ENCODE measurements at regions of chr11 and their contacts with region 1.

Region 1: DNA sequence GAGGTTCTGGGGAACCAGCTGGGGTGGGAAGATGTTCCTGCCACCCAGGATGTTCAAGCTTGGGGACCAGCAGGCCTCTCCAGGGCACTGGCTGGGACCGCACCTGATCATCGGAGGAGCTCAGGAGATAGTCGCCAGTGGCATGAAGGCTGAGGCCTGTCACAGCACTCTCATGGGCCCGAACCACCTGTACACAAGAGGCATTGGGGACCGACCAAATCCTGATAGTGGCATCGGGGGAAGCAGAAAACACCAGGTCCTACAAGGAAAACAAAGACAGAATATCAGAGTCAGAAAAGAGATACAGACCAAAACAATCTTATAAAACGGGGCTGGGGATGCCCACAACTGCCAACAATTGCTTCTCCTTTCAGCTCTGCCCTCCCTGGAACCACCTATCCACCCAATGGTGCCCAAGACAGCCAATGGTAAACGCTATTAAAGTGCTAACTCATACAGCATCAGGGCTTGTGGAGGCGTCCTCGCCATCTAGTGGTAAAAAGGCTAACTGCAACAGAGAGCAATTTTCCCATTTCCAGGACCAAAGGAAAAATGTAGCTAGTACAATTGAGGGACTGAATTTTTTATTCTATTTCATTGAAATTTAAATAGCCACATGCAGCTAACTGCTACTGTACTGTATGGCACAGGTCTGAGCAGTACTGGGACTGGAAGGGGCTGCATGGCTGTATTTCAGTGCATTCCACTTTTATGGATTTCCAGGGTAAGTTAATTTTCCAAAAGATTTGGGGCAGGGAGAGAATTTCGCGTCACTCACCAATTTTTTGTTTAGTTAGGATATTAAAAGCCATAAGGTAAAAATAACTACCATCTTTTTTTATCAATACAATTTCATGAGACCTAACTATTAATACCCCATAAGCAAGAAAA is 7.1 kb downstream of the PRPF19 start:
- DNase-seq: peak; percentile 24
- H3K4me3 ChIP-seq: no peak overlapping the region
- H3K27ac ChIP-seq: peak overlapping the region; percentile 31
- H3K27me3 ChIP-seq: no peaks in the 10 kb centered on the region
- CTCF ChIP-seq: peak; percentile 99

Region 2: DNA sequence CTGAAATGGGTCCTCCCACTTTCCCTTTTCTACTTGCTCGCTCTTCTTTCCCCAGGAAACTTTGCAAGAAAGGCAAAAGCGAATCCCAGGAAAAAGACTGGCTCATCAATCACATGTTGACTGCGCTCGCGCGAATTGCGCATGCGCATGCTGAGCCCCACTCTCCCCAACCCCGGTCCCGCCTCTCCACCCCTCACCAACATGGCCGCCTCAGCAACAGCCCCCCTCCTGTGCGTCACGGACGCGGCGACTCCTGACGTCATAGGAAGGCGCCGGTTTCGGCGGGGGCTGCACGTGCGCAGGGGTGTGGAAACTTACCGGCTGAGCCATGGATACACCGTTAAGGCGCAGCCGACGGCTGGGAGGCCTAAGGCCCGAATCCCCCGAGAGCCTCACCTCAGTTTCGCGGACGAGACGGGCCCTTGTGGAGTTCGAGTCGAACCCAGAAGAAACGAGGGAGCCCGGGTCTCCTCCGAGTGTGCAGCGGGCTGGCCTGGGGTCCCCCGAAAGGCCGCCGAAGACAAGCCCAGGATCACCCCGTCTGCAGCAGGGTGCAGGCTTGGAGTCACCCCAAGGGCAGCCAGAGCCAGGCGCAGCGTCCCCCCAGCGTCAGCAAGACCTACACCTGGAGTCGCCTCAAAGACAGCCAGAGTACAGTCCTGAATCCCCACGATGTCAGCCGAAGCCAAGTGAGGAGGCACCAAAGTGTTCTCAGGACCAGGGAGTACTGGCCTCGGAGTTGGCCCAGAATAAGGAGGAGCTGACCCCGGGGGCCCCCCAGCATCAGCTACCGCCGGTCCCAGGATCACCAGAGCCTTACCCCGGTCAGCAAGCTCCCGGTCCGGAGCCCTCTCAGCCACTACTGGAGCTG is 57.3 kb before region 1 on chr11 and contains the start of gene CCDC86:
- CTCF ChIA-PET with region 1: interaction called, 317 read pairs
- POLR2A ChIA-PET with region 1: no interaction called
- DNase-seq: peak; percentile 91
- H3K4me3 ChIP-seq: peak within 1 kb of the TSS; percentile 89
- H3K27ac ChIP-seq: peak within 1 kb of the TSS; percentile 66
- H3K27me3 ChIP-seq: peaks cover 10% of the 10 kb centered on the region
- CTCF ChIP-seq: no peak
- polyA plus RNA-seq, gene CCDC86: 15.2 and 17.9 TPM in 2 replicates

Region 3: GRCh38 chr11:60872961-60873524 is 26.2 kb before region 1 on chr11:
- CTCF ChIA-PET with region 1: interaction called, 24 read pairs
- POLR2A ChIA-PET with region 1: no interaction called
- DNase-seq: peak; percentile 39
- H3K4me3 ChIP-seq: no peak overlapping the region
- H3K27ac ChIP-seq: peak overlapping the region; percentile 70
- H3K27me3 ChIP-seq: peaks cover 2% of the 10 kb centered on the region
- CTCF ChIP-seq: no peak

Region 4: DNA sequence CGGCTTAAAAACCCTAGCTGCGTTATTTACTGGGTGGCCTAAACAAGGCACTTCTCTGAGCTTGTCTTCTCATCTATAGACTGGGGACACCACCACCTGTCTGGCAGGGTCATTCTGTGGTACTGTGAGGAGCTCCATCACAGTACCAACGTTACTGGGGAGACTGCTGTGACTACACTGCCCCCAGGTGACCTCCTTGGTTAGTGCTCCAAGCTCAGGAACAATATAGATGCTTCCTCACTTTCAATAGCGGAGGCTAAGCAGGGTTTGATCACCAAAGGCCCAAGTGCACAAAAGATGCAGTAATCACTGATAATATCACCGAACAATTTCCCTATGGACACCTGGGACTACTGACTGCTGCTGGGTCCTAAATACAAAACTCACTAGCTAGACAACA is 11.7 kb before region 1 on chr11:
- CTCF ChIA-PET with region 1: interaction called, 76 read pairs
- POLR2A ChIA-PET with region 1: no interaction called
- DNase-seq: no peak
- H3K4me3 ChIP-seq: no peak overlapping the region
- H3K27ac ChIP-seq: no peak overlapping the region
- H3K27me3 ChIP-seq: no peaks in the 10 kb centered on the region
- CTCF ChIP-seq: peak; percentile 80

Region 5: DNA sequence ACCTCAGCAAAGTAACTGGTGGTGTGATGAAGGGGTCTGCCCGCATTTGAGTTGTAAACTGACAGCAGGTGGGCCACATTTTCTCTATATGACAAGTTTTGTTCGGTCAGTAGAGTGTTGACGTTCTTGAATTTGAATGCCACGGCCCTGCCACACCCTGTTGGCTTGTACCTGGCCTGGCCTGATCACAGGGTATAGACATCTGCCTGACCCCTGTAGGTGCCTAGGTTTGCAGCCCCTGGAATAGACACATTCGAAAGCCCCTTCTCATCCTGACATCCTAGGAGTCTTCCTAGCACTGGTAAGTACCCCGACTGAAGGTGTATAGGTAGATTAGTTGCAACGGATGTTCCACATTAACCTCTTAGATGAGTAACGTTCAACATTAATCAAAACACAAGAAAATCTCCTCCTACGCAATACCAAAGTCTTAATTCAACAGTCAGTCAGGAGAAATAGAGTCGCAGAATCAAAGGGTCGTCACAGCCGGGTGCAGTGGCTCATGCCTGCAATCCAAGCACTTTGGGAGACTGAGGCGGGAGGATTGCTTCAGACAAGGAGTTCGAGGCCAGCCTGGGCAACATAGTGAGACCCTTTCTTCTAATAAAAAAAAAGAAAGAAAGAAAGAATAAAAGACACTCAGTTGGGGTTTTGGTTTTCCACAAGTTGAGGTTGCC is 159.4 kb after region 1 on chr11:
- CTCF ChIA-PET with region 1: no interaction called
- POLR2A ChIA-PET with region 1: no interaction called
- DNase-seq: no peak
- H3K4me3 ChIP-seq: no peak overlapping the region
- H3K27ac ChIP-seq: no peak overlapping the region
- H3K27me3 ChIP-seq: peaks cover 3% of the 10 kb centered on the region
- CTCF ChIP-seq: no peak

Region 6: DNA sequence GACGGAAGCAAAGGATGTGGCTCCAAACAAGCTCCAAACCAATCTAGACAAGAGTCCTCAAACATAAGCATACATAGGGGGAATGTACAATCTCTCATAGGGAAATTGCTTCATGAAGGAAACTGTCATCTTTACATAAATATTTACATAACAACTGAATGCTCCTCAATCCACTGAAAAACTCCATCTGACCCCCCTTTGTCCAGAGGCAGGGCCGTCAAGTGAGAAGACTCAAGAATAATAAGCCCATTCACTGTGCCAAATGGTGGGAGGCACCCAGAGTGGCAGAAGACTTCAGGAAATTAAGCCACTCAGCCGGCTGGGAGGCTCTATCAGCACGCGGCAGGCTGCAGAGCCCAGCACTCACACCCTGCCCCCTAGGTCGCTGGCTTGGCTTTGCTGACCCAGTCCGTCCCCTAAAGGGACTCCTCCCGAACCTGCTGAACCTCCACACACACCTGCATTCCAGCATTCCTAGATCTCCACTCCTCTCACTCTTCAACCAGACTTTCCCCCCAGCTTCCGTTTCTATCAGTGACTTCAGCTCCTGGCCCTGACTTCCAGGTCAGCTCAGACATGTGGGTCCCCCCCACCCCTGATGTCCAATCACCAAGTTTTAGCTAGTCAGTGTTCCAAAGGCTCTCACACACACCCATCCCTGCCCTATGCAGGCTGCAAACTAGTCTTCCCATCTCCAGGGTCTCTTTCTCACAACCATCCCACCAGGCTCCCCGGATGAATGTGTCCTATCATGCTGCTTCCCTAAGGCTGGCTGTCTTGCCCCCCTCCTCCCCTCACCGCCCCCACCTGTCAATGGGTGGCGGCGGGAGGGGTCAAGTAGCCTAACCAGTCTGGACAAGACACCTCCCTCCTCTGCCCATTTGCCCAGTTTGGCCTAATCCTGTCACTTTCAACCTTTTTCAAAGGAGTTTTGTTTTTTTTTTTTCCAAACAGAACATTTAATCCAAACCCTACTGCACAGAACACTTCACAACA is 250.6 kb after region 1 on chr11:
- CTCF ChIA-PET with region 1: no interaction called
- POLR2A ChIA-PET with region 1: no interaction called
- DNase-seq: peak; percentile 20
- H3K4me3 ChIP-seq: no peak overlapping the region
- H3K27ac ChIP-seq: no peak overlapping the region
- H3K27me3 ChIP-seq: no peaks in the 10 kb centered on the region
- CTCF ChIP-seq: no peak

Region 7: GRCh38 chr11:61187505-61188130 is 288.3 kb after region 1 on chr11:
- CTCF ChIA-PET with region 1: interaction called, 12 read pairs
- POLR2A ChIA-PET with region 1: no interaction called
- DNase-seq: peak; percentile 61
- H3K4me3 ChIP-seq: no peak overlapping the region
- H3K27ac ChIP-seq: no peak overlapping the region
- H3K27me3 ChIP-seq: peaks cover 2% of the 10 kb centered on the region
- CTCF ChIP-seq: peak; percentile 97

Measured in AG04450 (cell line).